ENCODE measurements at regions of chr10 and their contacts with region 1.

Region 1: DNA sequence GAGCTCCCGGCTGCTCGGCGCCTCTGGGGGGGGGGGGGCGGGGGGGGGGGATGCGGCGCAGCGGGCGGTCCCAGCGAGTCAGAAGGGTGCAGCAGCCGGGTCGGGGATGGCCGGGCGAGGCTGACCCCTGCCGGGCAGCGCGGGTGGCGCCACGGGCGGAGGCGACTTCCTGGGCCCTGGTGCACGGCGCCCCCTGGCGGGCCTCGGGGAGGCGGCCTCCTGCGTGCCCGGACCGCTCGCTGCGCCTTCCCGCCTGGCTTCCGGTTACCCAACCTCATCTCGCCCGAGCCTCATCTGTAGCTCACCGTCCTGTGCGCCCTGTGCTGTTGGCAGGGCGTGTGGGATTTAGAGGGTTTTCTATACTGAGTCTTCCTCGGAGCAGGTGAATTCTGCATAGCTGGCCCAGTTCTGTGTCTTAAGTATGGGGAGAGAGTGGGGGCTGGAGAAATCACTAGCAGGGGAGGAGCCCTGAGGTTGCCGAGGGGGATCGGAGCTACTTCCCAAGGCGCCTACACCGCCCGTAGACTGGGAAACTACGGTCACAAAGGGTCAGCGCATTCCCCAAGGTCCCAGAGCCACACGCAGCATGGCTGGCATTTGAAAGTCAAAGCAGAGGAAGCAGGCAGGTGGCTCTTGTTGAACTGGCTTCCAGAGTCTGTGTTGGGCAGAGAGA is 28.3 kb upstream of the WDFY4 start:
- DNase-seq: peak; percentile 93
- H3K4me3 ChIP-seq: peak overlapping the region; percentile 67
- H3K27ac ChIP-seq: no peak overlapping the region
- H3K4me1 ChIP-seq: peaks cover 26% of the 10 kb centered on the region
- CTCF ChIP-seq: peak; percentile 96

Region 2: DNA sequence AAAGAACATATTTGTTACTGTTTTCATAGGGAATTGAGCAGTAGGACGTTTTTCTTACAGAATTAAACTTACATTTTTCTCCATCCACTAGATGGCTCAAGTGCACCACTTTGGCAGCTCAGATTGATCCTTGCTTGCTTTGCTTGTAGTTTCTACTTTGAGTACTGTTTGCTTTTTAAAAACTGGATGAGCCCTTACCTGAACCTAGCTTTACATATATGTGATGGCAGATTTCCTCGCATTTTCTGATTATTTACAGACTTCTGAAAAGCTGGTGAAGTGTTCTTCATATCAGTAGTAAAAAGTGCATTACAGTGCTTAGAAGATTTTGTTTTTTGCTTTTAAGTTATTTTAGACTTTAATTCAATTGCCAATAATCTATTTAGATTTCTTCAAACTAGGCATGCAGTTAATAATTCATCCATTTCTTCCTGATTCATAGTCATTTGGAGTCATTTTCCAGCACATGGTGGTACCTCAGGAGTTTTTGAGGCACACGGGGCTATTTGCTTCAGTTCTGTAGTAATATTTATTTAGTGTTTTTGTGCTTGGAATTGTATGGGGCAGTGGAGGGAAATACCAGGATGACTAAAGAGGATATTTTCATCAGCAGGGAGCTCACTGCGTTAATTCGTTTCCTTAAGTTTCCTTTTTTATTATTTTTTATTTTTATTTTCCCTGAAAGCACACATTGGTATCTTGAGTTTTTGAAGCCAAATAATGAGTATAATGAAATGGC is 292.6 kb before region 1 on chr10:
- CTCF ChIA-PET with region 1: interaction called, 5 read pairs
- POLR2A ChIA-PET with region 1: no interaction called
- intact Hi-C with region 1: loop called (anchors 1 kb)
- DNase-seq: peak; percentile 55
- H3K4me3 ChIP-seq: no peak overlapping the region
- H3K27ac ChIP-seq: no peak overlapping the region
- H3K4me1 ChIP-seq: no peaks in the 10 kb centered on the region
- CTCF ChIP-seq: peak; percentile 90

Region 3: GRCh38 chr10:48551861-48552591 is 104.4 kb before region 1 on chr10:
- CTCF ChIA-PET with region 1: interaction called, 146 read pairs
- POLR2A ChIA-PET with region 1: interaction called, 19 read pairs
- intact Hi-C with region 1: loop called (anchors 1 kb)
- DNase-seq: peak; percentile 79
- H3K4me3 ChIP-seq: no peak overlapping the region
- H3K27ac ChIP-seq: no peak overlapping the region
- H3K4me1 ChIP-seq: peaks cover 18% of the 10 kb centered on the region
- CTCF ChIP-seq: peak; percentile 99

Region 4: DNA sequence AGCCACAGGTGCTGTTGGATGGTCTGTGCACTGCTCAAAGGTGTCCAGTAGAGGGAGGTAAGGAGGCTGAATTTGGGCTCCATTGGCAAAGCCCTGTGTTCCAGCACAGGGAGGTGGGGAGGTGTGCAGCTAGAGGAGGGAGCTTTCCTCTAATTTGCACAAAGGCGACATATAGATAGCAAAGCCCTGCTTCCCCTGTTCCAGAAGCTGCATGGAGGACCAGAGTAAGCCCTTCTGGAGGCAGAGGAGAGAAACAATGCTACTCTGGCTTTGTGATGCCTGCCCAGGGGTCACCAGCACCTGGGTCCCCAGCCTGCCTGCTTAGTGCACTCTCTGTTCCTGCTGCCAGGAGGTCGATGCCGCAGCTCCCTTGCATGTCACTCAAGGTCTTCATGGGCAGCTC is 48.1 kb before region 1 on chr10:
- CTCF ChIA-PET with region 1: interaction called, 61 read pairs
- POLR2A ChIA-PET with region 1: no interaction called
- intact Hi-C with region 1: loop called (anchors 1 kb)
- DNase-seq: peak; percentile 76
- H3K4me3 ChIP-seq: no peak overlapping the region
- H3K27ac ChIP-seq: no peak overlapping the region
- H3K4me1 ChIP-seq: peaks cover 9% of the 10 kb centered on the region
- CTCF ChIP-seq: peak; percentile 86

Region 5: GRCh38 chr10:48701139-48701901 is 44.9 kb after region 1 on chr10:
- CTCF ChIA-PET with region 1: interaction called, 7 read pairs
- POLR2A ChIA-PET with region 1: interaction called, 3 read pairs
- intact Hi-C with region 1: loop called (anchors 1 kb)
- DNase-seq: peak; percentile 32
- H3K4me3 ChIP-seq: no peak overlapping the region
- H3K27ac ChIP-seq: no peak overlapping the region
- H3K4me1 ChIP-seq: peaks cover 38% of the 10 kb centered on the region
- CTCF ChIP-seq: peak; percentile 77

Region 6: DNA sequence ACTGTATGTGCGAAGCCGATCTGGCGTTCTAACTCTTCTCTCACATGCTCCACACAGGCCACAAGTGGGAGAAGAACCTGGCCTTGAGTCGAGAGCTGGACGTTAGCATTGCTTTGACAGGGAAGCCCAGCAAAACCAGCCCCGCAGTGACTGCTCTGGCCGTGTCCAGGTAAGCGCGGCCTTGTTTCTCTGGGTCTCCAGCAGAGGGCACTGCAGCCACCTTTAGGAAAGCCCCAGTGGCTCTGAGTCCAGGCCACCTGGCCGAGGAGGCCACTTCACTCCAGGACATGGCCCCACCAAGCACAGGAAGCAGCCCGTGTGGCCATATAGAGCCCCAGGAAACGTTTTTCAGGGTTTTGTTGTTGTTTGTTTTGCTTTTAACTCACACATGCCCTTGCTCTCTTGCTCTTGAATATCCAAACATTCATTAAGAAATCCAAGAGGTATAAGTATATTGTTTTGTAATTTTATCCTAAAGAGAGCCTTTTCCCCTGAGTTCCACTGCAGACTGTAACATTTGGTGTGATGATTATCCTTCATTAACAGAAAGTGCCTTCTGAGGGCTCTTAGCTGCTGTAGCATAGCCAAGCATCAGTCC is 325.0 kb after region 1 on chr10:
- CTCF ChIA-PET with region 1: no interaction called
- POLR2A ChIA-PET with region 1: no interaction called
- intact Hi-C with region 1: loop called (anchors 1 kb)
- DNase-seq: peak; percentile 74
- H3K4me3 ChIP-seq: no peak overlapping the region
- H3K27ac ChIP-seq: no peak overlapping the region
- H3K4me1 ChIP-seq: peaks cover 11% of the 10 kb centered on the region
- CTCF ChIP-seq: peak; percentile 96

Region 7: DNA sequence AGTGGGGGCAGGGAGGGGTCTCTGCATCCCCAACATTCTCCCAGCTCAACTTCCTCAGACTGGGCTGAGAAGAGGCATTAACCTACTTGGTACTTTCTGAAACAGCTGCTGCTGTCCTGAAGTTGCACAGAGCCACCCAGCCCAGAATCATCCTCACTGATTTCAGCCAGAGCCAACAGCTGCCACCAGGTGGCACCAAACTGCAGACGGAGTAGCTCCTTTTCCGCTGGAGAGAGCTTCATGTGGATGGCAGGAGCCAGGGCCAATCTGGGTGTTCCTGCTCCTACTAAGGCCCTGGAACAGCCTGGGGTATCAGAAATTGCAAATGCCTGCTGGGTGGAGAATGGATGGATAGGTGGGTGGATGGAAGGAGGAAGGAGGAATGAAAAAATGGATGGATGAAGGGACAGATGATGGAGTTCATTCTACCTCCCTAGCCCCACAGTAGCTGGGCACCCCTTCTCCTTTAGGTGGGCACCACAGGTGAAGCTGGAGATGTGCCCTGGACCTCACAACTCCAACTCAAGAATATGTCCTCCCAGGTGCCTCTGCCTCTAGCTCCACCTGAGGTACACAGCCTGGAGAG is 751.3 kb after region 1 on chr10:
- CTCF ChIA-PET with region 1: no interaction called
- POLR2A ChIA-PET with region 1: no interaction called
- intact Hi-C with region 1: loop called (anchors 10 kb)
- DNase-seq: peak; percentile 70
- H3K4me3 ChIP-seq: no peak overlapping the region
- H3K27ac ChIP-seq: no peak overlapping the region
- H3K4me1 ChIP-seq: no peaks in the 10 kb centered on the region
- CTCF ChIP-seq: peak; percentile 92